Activated CD4-positive, alpha-beta memory T cell treated with anti-CD3 and anti-CD28 coated beads for 36 hours (primary cell): ENCODE measurements at regions of chr1 and their contacts with region 1.

Region 1: GRCh38 chr1:113811888-113812660 is at the start of gene RSBN1:
- DNase-seq: peak; percentile 100
- H3K4me3 Mint-ChIP-seq: peak within 1 kb of the TSS; percentile 99
- H3K27ac Mint-ChIP-seq: peak within 1 kb of the TSS; percentile 91
- H3K4me1 Mint-ChIP-seq: peaks cover 29% of the 10 kb centered on the region
- H3K27me3 Mint-ChIP-seq: no peaks in the 10 kb centered on the region
- total RNA-seq, gene RSBN1: 17.5 to 18.5 TPM

Region 2: GRCh38 chr1:113133038-113133437 is 679.0 kb before region 1 on chr1:
- CTCF ChIA-PET with region 1: no interaction called
- POLR2A ChIA-PET with region 1: no interaction called
- intact Hi-C with region 1: loop called (anchors 5 kb)
- DNase-seq: peak; percentile 63
- H3K4me3 Mint-ChIP-seq: no peak overlapping the region
- H3K27ac Mint-ChIP-seq: peak overlapping the region; percentile 18
- H3K4me1 Mint-ChIP-seq: peaks cover 43% of the 10 kb centered on the region
- H3K27me3 Mint-ChIP-seq: no peaks in the 10 kb centered on the region

Region 3: GRCh38 chr1:113759333-113760101 is 52.6 kb before region 1 on chr1 and contains the start of gene PHTF1:
- CTCF ChIA-PET with region 1: interaction called, 14 read pairs
- POLR2A ChIA-PET with region 1: interaction called, 14 read pairs
- intact Hi-C with region 1: loop called (anchors 1 kb)
- DNase-seq: peak; percentile 76
- H3K4me3 Mint-ChIP-seq: peak within 1 kb of the TSS; percentile 87
- H3K27ac Mint-ChIP-seq: peak within 1 kb of the TSS; percentile 99
- H3K4me1 Mint-ChIP-seq: peaks cover 26% of the 10 kb centered on the region
- H3K27me3 Mint-ChIP-seq: no peaks in the 10 kb centered on the region
- total RNA-seq, gene PHTF1: 12.6 to 12.9 TPM

Region 4: DNA sequence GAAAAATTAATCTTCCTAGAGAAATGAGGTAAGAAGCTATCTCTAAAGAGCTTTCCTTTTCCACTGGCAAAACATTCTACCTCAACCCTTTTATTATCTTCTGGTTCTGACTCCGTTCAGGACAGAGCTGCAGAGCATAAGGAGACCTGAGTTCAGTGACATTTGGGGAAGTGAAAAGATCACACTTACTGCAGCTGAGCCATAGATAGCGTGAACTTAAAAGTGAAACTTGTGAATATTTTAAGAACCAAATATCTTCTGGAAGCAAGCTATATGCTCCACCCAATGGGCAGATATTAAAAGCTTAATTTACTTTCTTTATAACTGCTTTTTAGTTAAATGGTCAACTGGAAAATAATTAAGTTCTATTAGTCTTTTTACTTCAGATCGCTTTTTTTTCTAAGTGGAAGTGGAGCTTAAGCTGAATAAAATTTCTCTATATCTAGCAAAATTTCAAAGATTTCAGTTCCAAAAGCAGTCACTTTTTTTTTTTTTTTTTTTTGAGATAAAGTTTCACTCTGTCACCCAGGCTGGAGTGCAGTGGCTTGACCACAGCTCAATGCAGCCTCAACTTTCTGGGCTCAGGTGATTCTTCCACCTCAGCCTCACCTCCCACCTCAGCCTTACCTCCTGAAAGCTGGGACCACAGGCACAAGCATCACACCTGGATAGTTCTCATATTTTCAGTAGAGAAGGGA is 47.6 kb after region 1 on chr1:
- CTCF ChIA-PET with region 1: no interaction called
- POLR2A ChIA-PET with region 1: no interaction called
- intact Hi-C with region 1: no loop called
- DNase-seq: no peak
- H3K4me3 Mint-ChIP-seq: no peak overlapping the region
- H3K27ac Mint-ChIP-seq: peak overlapping the region; percentile 4
- H3K4me1 Mint-ChIP-seq: peaks cover 36% of the 10 kb centered on the region
- H3K27me3 Mint-ChIP-seq: no peaks in the 10 kb centered on the region

Region 5: GRCh38 chr1:113871597-113872113 is 59.6 kb after region 1 on chr1 and contains the start of gene PTPN22:
- CTCF ChIA-PET with region 1: no interaction called
- POLR2A ChIA-PET with region 1: interaction called, 5 read pairs
- intact Hi-C with region 1: loop called (anchors 1 kb)
- DNase-seq: peak; percentile 89
- H3K4me3 Mint-ChIP-seq: peak within 1 kb of the TSS; percentile 80
- H3K27ac Mint-ChIP-seq: peak within 1 kb of the TSS; percentile 97
- H3K4me1 Mint-ChIP-seq: peaks cover 75% of the 10 kb centered on the region
- H3K27me3 Mint-ChIP-seq: no peaks in the 10 kb centered on the region
- total RNA-seq, gene PTPN22: 45.2 to 45.7 TPM

Region 6: DNA sequence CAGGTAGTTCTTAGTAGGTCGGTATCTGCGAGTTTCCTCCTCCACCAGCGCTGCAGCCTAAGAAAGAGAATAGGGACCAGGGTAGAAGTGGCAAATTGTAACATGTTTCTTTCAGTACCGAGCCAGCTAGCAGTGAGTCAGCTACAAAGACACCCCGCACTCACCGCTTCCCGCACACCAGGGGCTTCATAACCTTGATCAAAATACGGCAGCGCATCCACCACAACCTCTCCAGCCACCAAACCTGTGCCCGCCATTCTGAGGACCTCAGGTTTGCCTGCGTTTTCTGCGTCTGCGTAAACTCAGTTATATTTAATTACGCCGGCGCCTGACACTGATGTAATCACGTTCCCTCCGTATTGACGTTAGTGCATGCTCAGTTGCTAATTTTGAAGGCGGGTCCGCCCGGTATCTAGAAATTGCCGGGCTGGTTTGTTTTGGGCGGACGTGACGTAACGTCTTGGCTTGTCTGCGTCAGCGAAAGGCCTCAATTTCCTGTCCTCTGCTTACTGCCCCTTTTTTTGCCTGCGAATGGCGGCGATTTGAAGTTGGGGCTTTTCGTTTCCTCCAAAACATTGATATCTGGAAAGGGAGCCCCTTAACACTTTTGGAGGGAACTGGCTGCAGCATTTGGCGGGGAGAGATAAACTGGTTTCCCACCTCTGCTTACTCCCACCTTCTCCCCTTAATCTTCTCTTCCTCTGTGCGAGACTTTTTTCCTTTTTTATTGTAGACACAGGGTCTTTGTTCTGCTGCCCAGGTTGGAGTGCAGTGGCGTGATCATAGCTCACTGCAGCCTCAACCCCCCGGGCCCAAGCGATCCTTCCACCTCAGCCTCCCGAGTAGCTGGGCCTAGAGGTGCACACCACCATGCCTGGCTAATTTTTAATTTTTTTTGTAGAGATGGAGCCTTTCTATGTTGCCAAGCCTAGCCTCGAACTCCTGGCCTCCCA is 769.5 kb after region 1 on chr1 and contains the start of gene BCAS2:
- CTCF ChIA-PET with region 1: no interaction called
- POLR2A ChIA-PET with region 1: no interaction called
- intact Hi-C with region 1: loop called (anchors 5 kb)
- DNase-seq: peak; percentile 98
- H3K4me3 Mint-ChIP-seq: peak within 1 kb of the TSS; percentile 85
- H3K27ac Mint-ChIP-seq: peak within 1 kb of the TSS; percentile 83
- H3K4me1 Mint-ChIP-seq: peaks cover 29% of the 10 kb centered on the region
- H3K27me3 Mint-ChIP-seq: no peaks in the 10 kb centered on the region
- total RNA-seq, gene BCAS2: 48.5 to 49.0 TPM

Region 7: DNA sequence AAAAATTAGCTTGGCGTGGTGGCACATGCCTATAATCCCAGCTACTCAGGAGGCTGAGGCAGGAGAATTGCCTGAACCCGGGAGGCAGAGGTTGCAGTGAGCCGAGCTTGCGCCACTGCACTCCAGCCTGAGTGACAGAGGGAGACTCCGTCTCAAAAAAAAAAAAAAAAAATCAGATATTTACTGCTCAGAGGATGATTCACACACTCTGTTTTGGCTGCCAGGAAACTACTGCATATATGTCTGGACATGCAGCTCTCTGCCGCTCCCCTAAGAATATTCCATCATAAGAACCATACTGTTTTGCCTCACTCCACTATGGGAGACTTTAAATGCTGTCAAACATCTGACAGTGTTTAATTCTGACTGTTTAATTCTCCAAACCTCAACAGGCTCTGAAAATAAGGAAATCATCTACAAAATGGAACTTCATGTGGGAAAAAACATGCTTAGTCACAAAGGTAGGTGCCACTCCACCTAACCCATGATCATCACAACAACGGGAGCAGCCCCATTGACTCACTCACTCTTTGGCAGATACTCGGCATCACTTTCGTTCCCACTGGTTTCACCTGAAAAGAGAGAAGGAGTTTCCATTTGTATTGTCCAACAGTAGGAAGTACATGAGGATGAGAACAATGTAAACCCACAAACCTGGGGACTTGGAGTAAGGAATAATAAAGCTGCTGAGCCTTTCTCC is 798.6 kb after region 1 on chr1:
- CTCF ChIA-PET with region 1: no interaction called
- POLR2A ChIA-PET with region 1: no interaction called
- intact Hi-C with region 1: no loop called
- DNase-seq: no peak
- H3K4me3 Mint-ChIP-seq: no peak overlapping the region
- H3K27ac Mint-ChIP-seq: no peak overlapping the region
- H3K4me1 Mint-ChIP-seq: no peaks in the 10 kb centered on the region
- H3K27me3 Mint-ChIP-seq: peaks cover 4% of the 10 kb centered on the region